Uterus (tissue), 4 donors: ENCODE measurements at regions of chr18 and their contacts with region 1.

Region 1: GRCh38 chr18:2655178-2655953 is at the start of gene SMCHD1:
- DNase-seq: peak; percentile 85 to 86
- H3K4me3 ChIP-seq: peak within 1 kb of the TSS; percentile 93 to 99
- H3K27ac ChIP-seq: peak within 1 kb of the TSS; percentile 98 to 100
- H3K4me1 ChIP-seq: peaks cover 0 to 6% of the 10 kb centered on the region in 2 donors
- H3K27me3 ChIP-seq: no peaks in the 10 kb centered on the region
- CTCF ChIP-seq: peak in 1 of 4 experiments; percentile 24
- POLR2A ChIP-seq: peak; percentile 90 to 92
- total RNA-seq, gene SMCHD1: 58.4 to 270 (median 98.6) TPM

Region 2: DNA sequence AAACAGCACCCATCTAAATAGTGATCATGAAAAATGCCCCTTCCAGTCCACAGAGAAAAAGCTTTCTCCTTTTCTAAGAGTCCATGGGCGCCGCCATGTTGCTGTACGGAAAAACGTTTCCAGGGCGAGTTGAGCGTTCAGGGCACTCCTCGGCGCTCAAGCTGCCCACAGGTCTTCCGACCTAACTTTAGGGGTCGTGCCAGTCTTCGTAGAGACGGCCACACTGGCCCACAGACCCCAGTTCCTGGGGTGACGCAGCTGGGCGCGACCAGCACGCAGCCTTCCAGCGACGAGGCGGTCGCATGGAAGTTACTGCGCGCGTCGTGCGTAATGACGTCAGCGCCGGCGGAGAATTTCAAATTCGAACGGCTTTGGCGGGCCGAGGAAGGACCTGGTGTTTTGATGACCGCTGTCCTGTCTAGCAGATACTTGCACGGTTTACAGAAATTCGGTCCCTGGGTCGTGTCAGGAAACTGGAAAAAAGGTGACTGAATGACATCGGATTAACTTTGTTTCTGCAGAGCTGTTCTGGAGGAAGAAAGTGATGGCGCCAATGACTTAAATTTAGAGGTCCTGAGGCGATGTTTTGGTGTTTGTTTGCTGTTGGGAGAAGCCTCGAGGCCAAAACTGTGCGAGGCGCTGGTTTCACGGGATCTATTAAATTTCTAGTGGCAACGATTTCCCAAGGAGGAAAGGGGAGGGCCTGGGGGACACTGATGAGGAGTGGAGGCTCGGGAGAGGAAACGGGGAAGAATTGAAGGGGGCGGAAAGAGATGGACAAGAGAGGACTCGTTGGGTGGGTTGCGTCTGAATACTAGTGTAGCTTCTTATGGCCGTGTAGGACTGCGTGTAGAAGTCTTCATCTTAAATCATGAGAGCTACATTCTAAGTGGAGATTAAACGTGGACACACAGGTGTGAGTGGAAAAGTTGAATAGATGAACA is 83.9 kb before region 1 on chr18 and contains the starts of genes METTL4 and NDC80:
- intact Hi-C with region 1: loop called (anchors 5 kb)
- DNase-seq: peak; percentile 81 to 84
- H3K4me3 ChIP-seq: peak within 1 kb of the TSS; percentile 76 to 86
- H3K27ac ChIP-seq: peak within 1 kb of the TSS; percentile 96 to 98
- H3K4me1 ChIP-seq: peaks cover 0 to 7% of the 10 kb centered on the region in 2 donors
- H3K27me3 ChIP-seq: no peaks in the 10 kb centered on the region
- CTCF ChIP-seq: no peak
- POLR2A ChIP-seq: peak in 1 of 2 donors; percentile 58
- total RNA-seq, gene METTL4: 6.7 to 22.9 (median 18.5) TPM
- total RNA-seq, gene NDC80: 0.26 to 21.2 (median 0.80) TPM

Region 3: DNA sequence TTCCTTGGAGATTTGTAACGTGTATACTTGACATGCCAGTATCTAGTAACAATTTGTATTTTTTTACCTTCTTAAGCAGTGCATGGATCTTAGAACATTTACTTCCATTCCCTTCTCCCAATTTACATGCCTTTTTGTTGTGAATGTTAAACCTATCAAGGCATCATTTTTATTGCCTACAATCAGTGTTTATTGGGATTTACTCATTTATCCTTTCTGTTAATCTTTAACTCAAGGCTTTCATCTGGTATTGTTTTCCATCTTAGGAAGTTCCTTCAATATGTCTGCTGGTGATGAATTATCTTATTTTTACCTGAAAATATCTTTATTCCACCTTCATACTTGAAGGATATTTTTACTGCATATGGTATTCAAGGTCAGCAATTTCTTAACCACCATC is 102.9 kb after region 1 on chr18:
- intact Hi-C with region 1: no loop called
- DNase-seq: no peak
- H3K4me3 ChIP-seq: no peak overlapping the region
- H3K27ac ChIP-seq: no peak overlapping the region
- H3K4me1 ChIP-seq: no peaks in the 10 kb centered on the region
- H3K27me3 ChIP-seq: no peaks in the 10 kb centered on the region
- CTCF ChIP-seq: no peak
- POLR2A ChIP-seq: no peak

Region 4: DNA sequence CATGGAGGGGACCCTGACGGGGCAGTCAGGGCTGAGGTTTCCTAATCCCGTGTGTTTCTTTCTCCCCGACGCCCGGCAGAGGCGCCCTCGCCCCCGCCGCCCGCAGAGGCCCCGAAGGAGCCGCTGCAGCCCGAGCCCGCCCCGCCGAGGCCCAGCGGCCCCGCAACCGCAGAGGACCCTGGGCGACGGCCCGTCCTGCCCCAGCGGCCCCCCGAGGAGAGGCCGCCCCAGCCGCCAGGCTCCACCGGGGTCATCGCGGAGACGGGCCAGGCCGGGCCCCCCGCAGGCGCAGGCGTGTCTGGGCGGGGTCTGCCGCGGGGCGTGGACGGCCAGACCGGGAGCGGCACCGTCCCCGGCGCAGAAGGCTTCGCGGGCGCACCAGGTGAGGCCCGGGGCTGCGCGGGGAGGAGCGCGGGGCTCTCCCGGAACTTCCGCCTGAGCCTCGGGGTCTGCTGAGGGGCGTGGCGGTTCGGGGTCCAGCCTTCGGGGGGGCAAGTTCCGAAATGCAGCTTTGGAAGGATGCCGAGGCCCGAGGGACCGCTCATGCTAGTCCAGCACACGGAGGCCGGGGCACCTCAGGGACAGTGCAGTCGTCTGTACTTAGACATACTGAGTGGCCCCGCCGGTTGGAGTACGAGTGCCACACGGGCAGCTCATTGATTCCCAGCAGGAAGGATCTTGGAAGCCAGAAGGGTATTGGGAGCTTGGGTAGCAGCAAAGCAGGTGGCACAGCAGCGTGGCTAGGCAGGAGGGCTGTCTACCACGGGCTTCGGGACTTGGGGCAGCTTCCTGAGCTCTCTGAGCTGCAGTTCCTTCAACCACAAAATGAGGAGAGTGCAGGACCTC is 251.6 kb after region 1 on chr18:
- intact Hi-C with region 1: loop called (anchors 10 kb)
- DNase-seq: peak; percentile 58 to 59
- H3K4me3 ChIP-seq: peak overlapping the region; percentile 39 to 58
- H3K27ac ChIP-seq: peak overlapping the region; percentile 84 to 91
- H3K4me1 ChIP-seq: peaks cover 0 to 7% of the 10 kb centered on the region in 2 donors
- H3K27me3 ChIP-seq: no peaks in the 10 kb centered on the region
- CTCF ChIP-seq: peak in 2 of 4 experiments; percentile 33 to 64
- POLR2A ChIP-seq: peak in 1 of 2 donors; percentile 32